ENCODE measurements at regions of chr17 and their contacts with region 1.

Region 1: DNA sequence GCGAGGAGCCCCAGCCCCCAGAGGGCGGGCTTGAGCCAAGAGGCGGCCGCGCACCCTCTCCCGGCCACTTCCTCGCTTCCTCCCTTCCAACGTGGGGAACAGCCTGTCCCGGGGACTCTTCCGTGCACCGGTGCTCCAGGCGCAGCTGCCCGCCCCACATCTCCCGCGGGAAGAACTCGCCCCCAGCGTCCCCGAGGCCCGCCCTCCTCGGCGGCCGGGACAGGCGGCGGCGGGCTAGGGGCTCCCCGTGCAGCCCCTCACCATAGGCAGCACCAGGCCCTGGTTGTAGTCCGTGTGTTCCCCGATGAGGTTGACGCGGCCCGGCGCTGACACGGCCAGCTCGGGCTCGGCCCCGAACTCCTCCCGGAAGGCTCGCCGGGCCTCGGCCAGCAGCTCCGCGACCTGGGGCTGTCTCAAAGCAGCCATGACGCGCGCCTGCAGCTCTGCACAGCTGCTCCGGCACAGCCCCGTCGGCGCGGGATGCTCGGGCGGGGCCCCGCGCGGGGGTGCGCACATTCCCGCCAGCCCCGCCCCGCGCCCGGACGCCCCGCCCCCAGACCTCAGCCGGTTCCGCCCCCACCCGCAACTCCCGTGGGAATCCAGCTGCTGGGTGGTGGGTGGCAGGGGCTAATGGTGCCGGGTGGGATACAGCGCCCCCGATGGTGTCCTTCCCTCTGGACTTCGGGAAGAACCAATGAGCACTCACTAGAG is at the start of gene GALK1:
- DNase-seq: peak; percentile 89
- CTCF ChIP-seq: peak; percentile 88

Region 2: DNA sequence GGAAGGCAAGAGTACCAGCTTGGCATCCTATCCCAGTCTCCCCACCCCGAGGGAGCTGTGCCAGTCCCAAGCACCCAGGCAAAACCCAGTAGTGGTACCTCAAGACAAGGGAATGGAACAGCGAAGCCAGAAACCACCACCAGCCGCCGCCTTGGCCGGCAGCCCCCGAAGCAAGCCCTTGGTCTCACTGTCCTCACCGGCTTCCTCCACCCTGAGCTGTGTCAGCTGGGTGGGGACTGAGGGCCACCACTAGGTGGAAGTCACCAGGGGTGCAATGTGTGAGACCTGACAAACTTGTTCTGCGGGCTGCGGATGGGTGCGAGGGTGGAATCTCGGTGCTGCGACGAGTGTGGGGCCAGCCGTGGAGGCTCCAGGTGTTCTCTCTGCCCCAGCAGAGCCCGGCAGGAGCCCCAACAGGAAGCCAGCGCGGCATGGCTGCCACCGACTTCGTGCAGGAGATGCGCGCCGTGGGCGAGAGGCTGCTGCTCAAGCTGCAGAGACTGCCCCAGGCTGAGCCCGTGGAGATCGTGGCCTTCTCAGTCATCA is 125.0 kb before region 1 on chr17:
- CTCF ChIA-PET with region 1: no interaction called
- POLR2A ChIA-PET with region 1: no interaction called
- DNase-seq: no peak
- CTCF ChIP-seq: no peak

Region 3: DNA sequence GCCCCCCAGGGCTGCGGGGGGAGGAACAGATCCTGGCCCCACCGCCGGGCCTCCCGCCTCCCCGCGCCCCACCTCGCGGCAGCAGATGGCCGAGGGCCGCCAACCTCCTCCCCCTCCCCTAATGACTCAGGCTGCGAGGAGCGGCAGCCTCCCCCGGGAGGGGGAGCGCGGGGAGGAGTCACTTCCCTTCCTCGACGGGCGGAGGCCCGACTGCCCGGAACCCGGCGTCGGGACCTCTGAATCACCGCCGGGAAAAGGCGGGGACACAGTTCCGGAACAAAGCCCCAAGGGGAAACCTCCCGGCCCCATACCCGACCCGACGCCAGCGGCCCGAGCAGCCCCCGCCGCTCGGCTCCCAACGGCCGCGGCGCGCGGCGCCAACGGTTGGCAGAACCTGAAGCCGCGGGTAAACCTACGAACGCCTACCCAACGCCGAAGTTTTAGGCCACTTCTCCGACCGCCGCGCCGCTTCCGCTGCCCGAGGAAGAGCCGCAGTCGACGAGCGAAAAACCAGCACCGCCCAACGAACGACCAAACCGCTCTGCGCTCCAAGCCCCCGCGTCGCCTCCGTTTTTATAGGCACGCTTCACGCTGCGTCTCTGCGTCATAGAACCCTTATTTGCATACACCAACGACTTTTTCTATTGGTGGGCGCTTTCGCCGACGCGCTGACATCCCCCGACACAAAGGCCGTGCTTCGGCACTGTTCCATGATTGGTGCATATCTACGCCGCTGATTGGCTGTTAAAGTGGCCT is 14.5 kb after region 1 on chr17:
- CTCF ChIA-PET with region 1: interaction called, 71 read pairs
- POLR2A ChIA-PET with region 1: interaction called, 97 read pairs
- DNase-seq: peak; percentile 94
- CTCF ChIP-seq: no peak

Region 4: DNA sequence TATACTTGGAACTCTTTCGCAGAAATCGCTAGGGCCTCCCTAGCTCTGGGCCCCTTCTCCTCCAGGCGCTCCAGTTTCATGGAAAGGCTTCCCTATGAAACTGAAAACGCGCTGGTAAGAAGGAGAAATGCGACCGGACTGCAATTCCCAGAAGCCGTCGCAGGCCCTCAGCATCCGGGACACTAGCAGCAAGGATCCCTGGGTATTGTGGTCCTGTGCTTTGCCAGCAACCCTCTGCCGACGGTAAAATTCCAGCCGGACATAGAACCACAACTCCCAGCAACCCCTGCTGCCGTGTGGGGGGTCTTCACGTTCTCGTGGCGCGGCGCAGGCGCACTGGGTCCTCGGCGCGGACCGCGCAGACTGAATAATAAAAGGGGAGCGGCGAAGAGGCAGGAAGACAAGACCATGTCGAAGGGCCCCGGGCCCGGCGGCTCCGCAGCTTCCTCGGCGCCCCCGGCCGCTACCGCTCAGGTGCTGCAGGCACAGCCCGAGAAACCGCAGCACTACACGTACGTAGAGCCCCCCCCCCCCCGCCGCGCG is 19.7 kb after region 1 on chr17 and contains the start of gene UNK:
- CTCF ChIA-PET with region 1: interaction called, 71 read pairs
- POLR2A ChIA-PET with region 1: interaction called, 24 read pairs
- DNase-seq: peak; percentile 94
- CTCF ChIP-seq: no peak

Region 5: DNA sequence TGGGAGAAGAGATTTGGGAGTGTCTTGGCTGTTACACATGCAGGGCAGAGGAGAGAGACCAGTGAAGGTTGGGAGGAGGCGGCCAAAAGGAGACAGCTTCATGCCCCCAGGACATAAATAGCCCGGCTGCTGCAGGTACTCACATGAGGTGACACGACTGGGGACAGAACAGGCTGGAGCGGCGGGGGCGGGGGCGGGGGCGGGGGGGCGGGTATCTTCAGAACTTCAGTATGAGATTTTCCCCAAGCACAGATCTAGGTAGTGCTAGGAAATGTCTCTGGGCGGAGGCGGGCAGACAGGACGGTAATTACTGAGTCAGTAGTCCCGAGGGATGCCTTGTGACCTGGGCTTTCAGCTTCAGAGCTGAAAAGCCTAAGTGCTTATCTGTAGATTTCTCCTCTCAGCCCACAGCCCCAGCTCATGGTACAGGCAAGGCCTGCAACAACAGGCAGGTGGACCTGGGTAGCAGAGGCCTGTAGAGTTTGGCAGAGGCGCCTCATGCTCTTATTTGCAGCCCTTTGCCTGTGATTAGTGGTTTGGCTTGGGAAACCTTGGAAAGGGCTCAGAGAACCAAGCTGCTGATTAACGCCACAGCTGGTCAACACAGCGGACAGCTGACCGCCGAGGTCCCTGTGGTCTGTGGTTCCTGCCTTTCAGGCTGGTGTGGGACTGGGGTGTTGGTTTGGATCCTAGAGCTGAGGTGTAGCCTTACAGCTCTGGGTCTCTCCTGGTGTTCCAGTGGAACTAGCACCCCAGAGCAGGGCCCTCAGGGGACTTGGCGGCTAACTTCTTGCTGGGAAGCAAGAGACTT is 44.2 kb after region 1 on chr17:
- CTCF ChIA-PET with region 1: interaction called, 11 read pairs
- POLR2A ChIA-PET with region 1: no interaction called
- DNase-seq: peak; percentile 80
- CTCF ChIP-seq: no peak

Region 6: GRCh38 chr17:75822119-75822799 is 57.4 kb after region 1 on chr17:
- CTCF ChIA-PET with region 1: interaction called, 58 read pairs
- POLR2A ChIA-PET with region 1: no interaction called
- DNase-seq: no peak
- CTCF ChIP-seq: no peak

Region 7: DNA sequence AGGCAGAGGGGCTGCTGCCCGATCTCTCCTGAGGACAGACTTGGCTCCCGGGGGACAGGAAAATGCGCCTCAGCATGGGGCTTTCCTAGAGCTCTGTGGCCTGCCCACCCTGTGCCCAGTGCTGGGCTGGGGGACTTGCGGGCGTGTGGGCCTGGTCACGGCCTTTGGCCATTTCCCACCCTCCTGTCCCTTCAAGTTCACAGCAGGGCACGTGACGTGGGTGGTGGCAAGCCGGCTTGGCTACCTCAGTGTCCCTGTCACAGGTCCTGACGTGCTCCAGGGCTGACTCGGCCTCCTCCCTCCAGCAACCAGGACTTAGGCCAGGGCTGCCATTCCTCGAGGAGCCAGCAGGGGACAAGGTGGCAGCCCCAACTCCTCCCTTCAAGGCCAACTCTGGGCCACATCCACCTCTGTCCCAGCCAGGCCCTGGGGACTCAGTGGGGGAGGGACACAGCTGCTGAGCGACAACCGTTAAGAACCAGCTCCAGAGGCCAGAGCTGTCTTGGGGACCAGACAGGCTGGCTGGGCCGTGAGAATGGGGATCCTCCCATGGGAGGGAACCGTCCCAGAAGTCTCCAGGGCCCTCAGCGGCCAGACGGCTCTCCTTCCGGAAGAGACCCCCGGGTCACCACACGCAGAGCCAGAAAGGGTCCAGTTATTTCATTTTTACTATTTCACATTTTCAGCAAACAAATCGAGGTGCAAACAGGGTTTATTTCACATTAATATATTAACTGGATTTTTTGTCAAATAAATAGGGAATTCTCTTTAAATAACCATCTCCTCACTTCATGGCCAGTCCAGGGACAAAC is 80.4 kb after region 1 on chr17:
- CTCF ChIA-PET with region 1: interaction called, 10 read pairs
- POLR2A ChIA-PET with region 1: interaction called, 3 read pairs
- DNase-seq: peak; percentile 91
- CTCF ChIP-seq: peak; percentile 69